Gastrocnemius medialis (tissue), 4 donors: ENCODE measurements at regions of chrX and their contacts with region 1.

Region 1: GRCh38 chrX:119004920-119005524 is 30.6 kb downstream of the LONRF3 start:
- DNase-seq: peak in 1 of 2 donors; percentile 41
- ATAC-seq: peak in 1 of 2 donors; percentile 76
- H3K4me3 ChIP-seq: no peak overlapping the region
- H3K27ac ChIP-seq: no peak overlapping the region
- H3K4me1 ChIP-seq: no peaks in the 10 kb centered on the region
- H3K27me3 ChIP-seq: no peaks in the 10 kb centered on the region
- CTCF ChIP-seq: peak; percentile 31 to 83 (median 58)
- POLR2A ChIP-seq: no peak

Region 2: DNA sequence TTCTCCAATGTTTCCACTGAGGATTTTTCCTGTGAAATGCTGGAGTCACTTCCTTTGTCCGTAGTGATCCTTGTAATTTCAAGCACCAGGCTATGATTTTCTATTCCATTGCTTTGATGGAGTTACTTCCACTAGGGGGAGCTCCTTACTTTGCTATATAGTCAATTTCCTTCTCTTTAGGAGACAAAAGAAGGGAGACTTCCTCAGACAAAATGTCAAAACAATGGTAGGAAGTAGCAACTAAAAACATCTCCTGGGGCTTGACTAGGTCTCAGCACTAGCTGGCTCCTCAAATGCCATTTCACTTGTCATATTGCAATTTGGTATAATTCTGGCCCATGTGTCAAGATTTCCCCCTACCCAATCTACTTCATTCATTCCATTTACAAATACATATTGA is 157.3 kb before region 1 on chrX:
- in situ Hi-C with region 1: no loop called
- intact Hi-C with region 1: loop called (anchors 5 kb)
- DNase-seq: no peak
- ATAC-seq: peak; percentile 73 to 89
- H3K4me3 ChIP-seq: no peak overlapping the region
- H3K27ac ChIP-seq: no peak overlapping the region
- H3K4me1 ChIP-seq: no peaks in the 10 kb centered on the region
- H3K27me3 ChIP-seq: no peaks in the 10 kb centered on the region
- CTCF ChIP-seq: peak in 4 of 5 experiments; percentile 33 to 68 (median 60)
- POLR2A ChIP-seq: no peak